ENCODE measurements at regions of chr16 and their contacts with region 1.

Region 1: GRCh38 chr16:75238132-75238852 is 13.1 kb downstream of the BCAR1 start:
- DNase-seq: peak; percentile 90 to 93
- ATAC-seq: peak; percentile 72
- H3K4me3 ChIP-seq: no peak overlapping the region
- H3K27ac ChIP-seq: peak overlapping the region; percentile 58 to 64
- H3K4me1 ChIP-seq: no peaks in the 10 kb centered on the region
- H3K27me3 ChIP-seq: no peaks in the 10 kb centered on the region

Region 2: DNA sequence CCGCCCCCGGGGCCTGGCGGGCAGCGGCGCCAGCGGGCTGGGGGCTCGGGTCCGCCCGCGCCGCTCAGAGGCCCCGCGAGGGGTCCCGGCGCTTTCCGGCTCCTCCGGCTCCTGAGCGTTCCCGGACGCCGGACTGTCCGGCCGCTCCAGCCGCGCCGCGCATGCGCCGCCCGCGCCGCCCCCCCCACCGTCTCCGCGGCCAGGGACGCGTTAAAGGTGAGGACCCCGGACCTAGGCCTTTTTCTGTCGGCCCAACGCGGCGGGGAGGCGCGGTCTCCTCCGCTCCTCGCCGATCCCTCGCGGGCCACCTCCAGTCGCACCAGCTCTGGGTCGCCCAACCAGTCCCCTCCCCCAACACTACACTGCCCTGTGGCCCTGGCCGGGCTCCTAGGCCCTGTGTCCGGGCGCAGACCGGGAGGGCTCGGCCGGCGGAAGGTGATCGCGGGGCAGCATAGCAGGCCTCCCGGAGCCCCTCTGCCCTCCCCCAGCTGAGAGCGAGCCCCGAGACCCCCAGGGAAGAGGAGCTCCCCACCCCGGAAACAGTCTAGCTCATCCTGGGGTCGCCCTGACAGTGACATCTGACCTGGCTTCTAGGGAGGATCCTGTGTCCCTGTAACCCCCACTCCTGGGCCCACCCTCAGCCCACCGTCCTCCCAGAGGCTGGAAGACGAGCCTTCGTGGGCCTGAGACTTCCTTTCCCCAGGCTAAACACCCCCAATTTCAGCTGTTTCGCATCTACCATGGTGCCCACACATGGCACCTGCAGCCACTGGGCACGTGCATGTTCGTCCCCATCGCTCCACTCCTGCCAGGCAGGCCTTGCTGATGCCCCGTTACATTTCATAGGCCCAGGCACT is 27.8 kb after region 1 on chr16:
- intact Hi-C with region 1: no loop called
- DNase-seq: peak; percentile 76 to 91
- ATAC-seq: peak; percentile 60
- H3K4me3 ChIP-seq: peak overlapping the region; percentile 93 to 97
- H3K27ac ChIP-seq: peak overlapping the region; percentile 86 to 95
- H3K4me1 ChIP-seq: peaks cover 0 to 2% of the 10 kb centered on the region in 2 donors
- H3K27me3 ChIP-seq: no peaks in the 10 kb centered on the region

Region 3: DNA sequence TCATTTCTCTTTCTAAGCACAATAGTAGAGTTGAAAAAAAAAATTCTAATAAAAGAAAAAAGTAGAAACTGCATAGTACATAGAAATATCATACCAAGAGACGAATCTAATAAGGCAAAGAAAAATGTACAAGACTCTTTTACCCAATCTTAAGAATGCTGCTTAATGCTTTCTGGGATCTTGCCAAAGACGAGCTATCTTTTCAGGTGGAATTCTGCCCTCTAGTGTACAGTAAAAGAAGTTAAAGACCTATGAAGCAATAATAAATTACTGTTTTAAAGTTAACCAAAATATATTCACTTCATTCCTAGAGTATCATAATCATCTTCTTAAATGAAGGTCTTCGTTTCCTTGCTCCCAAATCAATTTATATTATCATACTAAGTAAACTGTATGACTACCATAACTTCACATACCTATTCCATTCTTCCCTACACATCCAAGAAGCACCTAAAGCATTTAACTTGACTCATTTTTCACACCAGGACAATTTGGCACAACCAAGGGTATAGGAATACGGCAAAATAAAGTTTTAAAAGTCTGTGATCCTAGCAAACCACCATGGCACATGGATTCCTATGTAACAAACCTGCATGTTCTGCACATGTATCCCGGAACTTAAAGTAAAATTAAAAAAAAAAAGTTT is 147.3 kb after region 1 on chr16:
- intact Hi-C with region 1: loop called (anchors 1 to 5 kb)
- DNase-seq: no peak
- ATAC-seq: peak; percentile 63
- H3K4me3 ChIP-seq: no peak overlapping the region
- H3K27ac ChIP-seq: no peak overlapping the region
- H3K4me1 ChIP-seq: peaks cover 10 to 20% of the 10 kb centered on the region in 2 donors
- H3K27me3 ChIP-seq: no peaks in the 10 kb centered on the region

Region 4: GRCh38 chr16:75402821-75403475 is 164.7 kb after region 1 on chr16:
- intact Hi-C with region 1: loop called (anchors 2 to 5 kb)
- DNase-seq: no peak
- ATAC-seq: peak; percentile 67
- H3K4me3 ChIP-seq: no peak overlapping the region
- H3K27ac ChIP-seq: peak overlapping the region in 1 of 2 donors; percentile 63
- H3K4me1 ChIP-seq: peaks cover 0 to 3% of the 10 kb centered on the region in 2 donors
- H3K27me3 ChIP-seq: no peaks in the 10 kb centered on the region